Activated naive CD4-positive, alpha-beta T cell treated with anti-CD3 and anti-CD28 coated beads for 36 hours (primary cell): ENCODE measurements at regions of chrX and their contacts with region 1.

Region 1: GRCh38 chrX:120697053-120697452 is 67.2 kb upstream of the C1GALT1C1 start:
- DNase-seq: peak; percentile 69
- H3K4me3 Mint-ChIP-seq: no peak overlapping the region
- H3K27ac Mint-ChIP-seq: peak overlapping the region; percentile 83
- H3K4me1 Mint-ChIP-seq: peaks cover 27% of the 10 kb centered on the region
- H3K27me3 Mint-ChIP-seq: no peaks in the 10 kb centered on the region

Region 2: DNA sequence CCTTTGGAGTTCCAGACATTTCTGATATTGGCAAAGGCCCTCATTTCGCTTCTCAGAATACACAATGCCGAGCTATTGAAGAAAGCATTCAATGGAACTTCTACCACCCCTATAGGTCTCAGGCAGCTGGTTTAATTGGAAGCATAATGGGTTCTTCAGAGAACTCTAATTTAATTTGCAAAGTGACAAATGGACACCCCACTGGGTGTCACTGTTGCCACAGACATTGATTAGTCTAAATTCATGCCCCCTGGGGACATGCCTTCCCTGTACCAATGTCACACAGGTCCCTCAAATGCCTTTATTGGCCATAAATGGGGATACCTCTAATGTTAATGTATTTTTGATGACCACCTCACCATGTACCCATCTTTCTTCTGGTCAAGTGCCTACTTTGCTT is 362.9 kb before region 1 on chrX:
- CTCF ChIA-PET with region 1: no interaction called
- intact Hi-C with region 1: no loop called
- DNase-seq: no peak
- H3K4me3 Mint-ChIP-seq: no peak overlapping the region
- H3K27ac Mint-ChIP-seq: no peak overlapping the region
- H3K4me1 Mint-ChIP-seq: no peaks in the 10 kb centered on the region
- H3K27me3 Mint-ChIP-seq: no peaks in the 10 kb centered on the region

Region 3: GRCh38 chrX:120718969-120719368 is 21.9 kb after region 1 on chrX:
- CTCF ChIA-PET with region 1: no interaction called
- intact Hi-C with region 1: loop called (anchors 1 kb)
- DNase-seq: peak; percentile 7
- H3K4me3 Mint-ChIP-seq: no peak overlapping the region
- H3K27ac Mint-ChIP-seq: no peak overlapping the region
- H3K4me1 Mint-ChIP-seq: no peaks in the 10 kb centered on the region
- H3K27me3 Mint-ChIP-seq: no peaks in the 10 kb centered on the region

Region 4: GRCh38 chrX:120755066-120755846 is 58.2 kb after region 1 on chrX:
- CTCF ChIA-PET with region 1: interaction called, 4 read pairs
- intact Hi-C with region 1: loop called (anchors 5 kb)
- DNase-seq: peak; percentile 40
- H3K4me3 Mint-ChIP-seq: no peak overlapping the region
- H3K27ac Mint-ChIP-seq: peak overlapping the region; percentile 67
- H3K4me1 Mint-ChIP-seq: peaks cover 45% of the 10 kb centered on the region
- H3K27me3 Mint-ChIP-seq: no peaks in the 10 kb centered on the region